ENCODE measurements at regions of chr14 and their contacts with region 1.

Region 1: GRCh38 chr14:24310646-24311604 is at the start of gene LTB4R:
- DNase-seq: peak; percentile 78
- ATAC-seq: peak; percentile 68
- H3K4me3 Mint-ChIP-seq: peak within 1 kb of the TSS; percentile 47
- H3K27ac Mint-ChIP-seq: no peak within 1 kb of the TSS
- H3K4me1 Mint-ChIP-seq: peaks cover 15% of the 10 kb centered on the region
- H3K27me3 Mint-ChIP-seq: peaks cover 44% of the 10 kb centered on the region
- CTCF ChIP-seq: no peak; the same call in 1 of the 2 replicates
- total RNA-seq, gene LTB4R: 6.9 to 9.4 TPM (median 7.6 TPM) in 3 replicates

Region 2: GRCh38 chr14:24241829-24242443 is 69.0 kb before region 1 on chr14:
- CTCF ChIA-PET with region 1: interaction called, 97 read pairs
- POLR2A ChIA-PET with region 1: interaction called, 8 read pairs
- DNase-seq: peak; percentile 95
- ATAC-seq: peak; percentile 85
- H3K4me3 Mint-ChIP-seq: peak overlapping the region; percentile 93
- H3K27ac Mint-ChIP-seq: peak overlapping the region; percentile 97
- H3K4me1 Mint-ChIP-seq: peaks cover 13% of the 10 kb centered on the region
- H3K27me3 Mint-ChIP-seq: peaks cover 12% of the 10 kb centered on the region
- CTCF ChIP-seq: no peak

Region 3: GRCh38 chr14:24271134-24271833 is 39.6 kb before region 1 on chr14 and contains the start of gene RABGGTA:
- CTCF ChIA-PET with region 1: interaction called, 30 read pairs
- POLR2A ChIA-PET with region 1: interaction called, 3 read pairs
- DNase-seq: peak; percentile 95
- ATAC-seq: peak; percentile 94
- H3K4me3 Mint-ChIP-seq: peak within 1 kb of the TSS; percentile 72
- H3K27ac Mint-ChIP-seq: peak within 1 kb of the TSS; percentile 87
- H3K4me1 Mint-ChIP-seq: peaks cover 16% of the 10 kb centered on the region
- H3K27me3 Mint-ChIP-seq: no peaks in the 10 kb centered on the region
- CTCF ChIP-seq: 0 out of 2 replicates have a peak, but pooled peaks have one; percentile 15
- total RNA-seq, gene RABGGTA: 22.3 to 28.1 TPM (median 27.1 TPM) in 3 replicates

Region 4: DNA sequence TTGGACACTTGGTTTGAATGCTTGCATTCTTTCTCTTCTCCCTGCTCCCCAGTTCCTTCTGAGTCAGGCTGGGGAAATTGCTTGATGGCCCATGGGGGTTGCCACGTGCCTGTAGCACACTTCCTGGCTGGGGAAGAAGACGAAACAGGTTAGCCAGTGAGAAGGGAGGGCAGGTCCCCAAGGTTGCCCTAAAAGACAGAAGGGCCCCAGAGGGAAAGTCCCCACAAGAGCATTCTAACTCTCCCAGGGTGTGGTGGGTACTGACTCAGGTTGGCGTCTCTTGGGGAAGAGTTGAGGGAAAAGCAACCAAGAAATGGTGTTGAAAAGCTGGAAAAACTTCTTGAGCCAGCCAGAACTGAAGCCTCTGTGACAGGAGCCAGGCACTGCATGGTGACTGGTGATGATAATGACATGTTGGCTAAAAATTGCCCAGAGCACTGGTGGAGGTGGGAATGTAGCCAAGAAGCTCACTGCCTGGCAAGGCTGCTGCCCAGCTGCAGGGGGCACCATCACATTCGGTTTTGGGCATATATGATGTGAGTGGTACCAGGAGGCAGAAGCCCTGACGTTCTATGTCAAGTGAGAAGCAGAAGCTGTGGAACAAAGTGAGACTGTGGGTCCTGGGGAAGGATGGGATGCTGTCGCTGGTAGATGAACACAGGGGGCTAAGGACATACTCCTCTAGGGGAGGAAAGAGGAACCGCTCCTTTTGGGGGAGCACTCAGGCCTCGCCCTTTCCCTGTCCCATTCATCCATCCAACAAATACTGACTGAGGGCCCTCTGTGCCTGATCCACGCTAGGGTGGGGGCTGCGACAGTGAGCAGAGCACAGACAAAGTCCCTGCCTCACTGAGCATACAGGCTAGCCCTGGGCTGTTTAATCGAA is 31.4 kb before region 1 on chr14:
- CTCF ChIA-PET with region 1: interaction called, 22 read pairs
- POLR2A ChIA-PET with region 1: no interaction called
- DNase-seq: no peak
- ATAC-seq: no peak
- H3K4me3 Mint-ChIP-seq: no peak overlapping the region
- H3K27ac Mint-ChIP-seq: no peak overlapping the region
- H3K4me1 Mint-ChIP-seq: no peaks in the 10 kb centered on the region
- H3K27me3 Mint-ChIP-seq: no peaks in the 10 kb centered on the region
- CTCF ChIP-seq: no peak

Region 5: GRCh38 chr14:24299255-24300195 is 11.4 kb before region 1 on chr14 and contains the starts of genes DHRS1 and NOP9:
- CTCF ChIA-PET with region 1: interaction called, 83 read pairs
- POLR2A ChIA-PET with region 1: interaction called, 8 read pairs
- DNase-seq: peak; percentile 94
- ATAC-seq: peak; percentile 83
- H3K4me3 Mint-ChIP-seq: peak within 1 kb of the TSS; percentile 91
- H3K27ac Mint-ChIP-seq: peak within 1 kb of the TSS; percentile 89
- H3K4me1 Mint-ChIP-seq: peaks cover 19% of the 10 kb centered on the region
- H3K27me3 Mint-ChIP-seq: 0 out of 2 replicates have a peak, but pooled peaks cover 3% of the 10 kb centered on the region
- CTCF ChIP-seq: no peak
- total RNA-seq, gene DHRS1: 13.9 to 16.7 TPM (median 15.4 TPM) in 3 replicates
- total RNA-seq, gene NOP9: 34.3 to 44.4 TPM (median 35.0 TPM) in 3 replicates

Region 6: DNA sequence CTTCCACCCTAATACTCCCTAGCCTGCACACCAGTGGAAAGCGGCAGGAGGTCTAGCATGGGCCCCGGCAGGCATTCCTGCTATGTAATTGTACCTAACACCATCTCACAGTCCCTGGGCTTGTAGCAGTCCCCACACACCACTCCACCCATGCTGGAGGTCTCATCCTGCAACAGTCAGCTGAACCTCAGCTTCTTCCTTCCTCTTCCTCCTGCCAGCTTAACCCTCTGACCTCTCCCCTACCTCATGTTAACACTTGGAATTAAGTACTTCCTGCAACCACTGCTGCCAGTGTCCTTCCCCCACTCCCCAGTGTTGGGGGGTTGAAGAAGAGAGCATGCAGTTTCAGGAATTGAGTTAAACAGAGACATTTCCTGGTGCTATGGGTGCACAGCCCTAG is 16.4 kb after region 1 on chr14:
- CTCF ChIA-PET with region 1: interaction called, 66 read pairs
- POLR2A ChIA-PET with region 1: no interaction called
- DNase-seq: no peak
- ATAC-seq: no peak
- H3K4me3 Mint-ChIP-seq: no peak overlapping the region
- H3K27ac Mint-ChIP-seq: no peak overlapping the region
- H3K4me1 Mint-ChIP-seq: peaks cover 4% of the 10 kb centered on the region
- H3K27me3 Mint-ChIP-seq: peaks cover 81% of the 10 kb centered on the region
- CTCF ChIP-seq: no peak

Region 7: GRCh38 chr14:24339284-24340151 is 28.6 kb after region 1 on chr14 and contains the start of gene RIPK3:
- CTCF ChIA-PET with region 1: interaction called, 66 read pairs
- POLR2A ChIA-PET with region 1: no interaction called
- DNase-seq: peak; percentile 68
- ATAC-seq: peak; percentile 69
- H3K4me3 Mint-ChIP-seq: peak within 1 kb of the TSS; percentile 80
- H3K27ac Mint-ChIP-seq: no peak within 1 kb of the TSS
- H3K4me1 Mint-ChIP-seq: peaks cover 13% of the 10 kb centered on the region
- H3K27me3 Mint-ChIP-seq: peaks cover 95% of the 10 kb centered on the region
- CTCF ChIP-seq: no peak
- total RNA-seq, gene RIPK3: 0.37 to 1.2 TPM (median 0.83 TPM) in 3 replicates